Heart left ventricle (tissue), 16 donors: ENCODE measurements at regions of chr18 and their contacts with region 1.

Region 1: GRCh38 chr18:43720036-43720435 is 442.7 kb upstream of the SYT4 start:
- DNase-seq: no peak
- ATAC-seq: no peak
- H3K4me3 ChIP-seq: no peak overlapping the region
- H3K27ac ChIP-seq: no peak overlapping the region
- H3K4me1 ChIP-seq: peaks cover 0 to 3% (median 0%) of the 10 kb centered on the region in 12 donors
- H3K27me3 ChIP-seq: no peaks in the 10 kb centered on the region
- CTCF ChIP-seq: no peak
- POLR2A ChIP-seq: no peak

Region 2: DNA sequence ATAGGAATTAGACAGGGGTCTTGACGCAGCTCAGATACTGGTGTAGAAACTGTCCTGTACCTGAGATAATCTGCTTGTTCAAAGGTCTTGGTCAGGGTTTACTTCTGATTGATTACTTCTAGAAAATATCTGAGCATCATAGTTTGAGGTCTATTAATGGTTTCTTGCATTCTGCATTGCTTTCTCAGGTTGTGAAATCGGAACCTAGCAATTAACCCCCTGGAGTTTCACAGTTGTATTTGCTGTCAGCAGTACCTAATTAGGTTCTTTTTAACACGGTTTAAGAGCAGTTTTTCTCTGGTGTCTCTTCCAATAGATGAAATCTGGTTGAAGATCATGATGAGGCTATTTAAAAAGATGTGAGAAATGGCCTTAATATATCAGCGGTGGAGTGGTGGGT is 14.2 kb before region 1 on chr18:
- intact Hi-C with region 1: no loop called
- DNase-seq: no peak
- ATAC-seq: no peak
- H3K4me3 ChIP-seq: no peak overlapping the region
- H3K27ac ChIP-seq: no peak overlapping the region
- H3K4me1 ChIP-seq: no peaks in the 10 kb centered on the region
- H3K27me3 ChIP-seq: no peaks in the 10 kb centered on the region
- CTCF ChIP-seq: no peak
- POLR2A ChIP-seq: no peak

Region 3: GRCh38 chr18:43932140-43932539 is 212.1 kb after region 1 on chr18:
- intact Hi-C with region 1: no loop called
- DNase-seq: no peak
- ATAC-seq: peak in 1 of 4 donors; percentile 72
- H3K4me3 ChIP-seq: no peak overlapping the region
- H3K27ac ChIP-seq: peak overlapping the region in 5 of 12 donors; percentile 1 to 59 (median 6)
- H3K4me1 ChIP-seq: peaks cover 0 to 2% (median 0%) of the 10 kb centered on the region in 12 donors
- H3K27me3 ChIP-seq: no peaks in the 10 kb centered on the region
- CTCF ChIP-seq: no peak
- POLR2A ChIP-seq: no peak

Region 4: DNA sequence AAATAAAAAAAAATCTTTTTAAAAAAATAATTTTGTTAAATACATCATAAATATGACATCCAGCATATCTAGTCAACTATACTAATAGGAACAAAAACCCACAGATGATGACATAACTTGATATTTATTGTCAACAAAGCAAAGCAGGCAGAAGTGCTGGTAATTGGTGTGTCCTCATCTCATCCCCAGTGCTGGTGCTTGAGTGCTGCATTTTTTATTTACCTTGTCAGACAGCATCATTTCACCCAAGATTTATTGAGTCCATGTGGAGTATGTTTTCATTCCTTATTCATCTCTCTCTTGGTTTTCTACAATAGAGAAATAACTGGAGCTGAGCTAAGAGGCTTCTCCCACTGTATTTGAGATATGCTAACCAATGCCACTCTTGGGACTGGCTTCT is 1703.6 kb after region 1 on chr18:
- intact Hi-C with region 1: loop called in 1 of 10 experiments (anchors 10 kb)
- DNase-seq: no peak
- ATAC-seq: no peak
- H3K4me3 ChIP-seq: no peak overlapping the region
- H3K27ac ChIP-seq: no peak overlapping the region
- H3K4me1 ChIP-seq: no peaks in the 10 kb centered on the region
- H3K27me3 ChIP-seq: peaks cover 0 to 4% (median 0%) of the 10 kb centered on the region in 9 donors
- CTCF ChIP-seq: no peak
- POLR2A ChIP-seq: no peak